ENCODE measurements at regions of chr9 and their contacts with region 1.

Region 1: GRCh38 chr9:133144137-133144903 is 19.4 kb downstream of the GBGT1 start:
- DNase-seq: peak; percentile 96
- H3K4me3 Mint-ChIP-seq: peak overlapping the region; percentile 64
- H3K27ac Mint-ChIP-seq: peak overlapping the region; percentile 93
- H3K4me1 Mint-ChIP-seq: peaks cover 83% of the 10 kb centered on the region
- H3K27me3 Mint-ChIP-seq: peaks cover 5% of the 10 kb centered on the region

Region 2: GRCh38 chr9:133023117-133023890 is 121.0 kb before region 1 on chr9:
- CTCF ChIA-PET with region 1: interaction called, 18 read pairs
- DNase-seq: peak; percentile 81
- H3K4me3 Mint-ChIP-seq: peak overlapping the region; percentile 35
- H3K27ac Mint-ChIP-seq: peak overlapping the region; percentile 28
- H3K4me1 Mint-ChIP-seq: peaks cover 28% of the 10 kb centered on the region
- H3K27me3 Mint-ChIP-seq: peaks cover 17% of the 10 kb centered on the region

Region 3: GRCh38 chr9:133037775-133038515 is 106.4 kb before region 1 on chr9:
- CTCF ChIA-PET with region 1: interaction called, 39 read pairs
- DNase-seq: no peak
- H3K4me3 Mint-ChIP-seq: no peak overlapping the region
- H3K27ac Mint-ChIP-seq: no peak overlapping the region
- H3K4me1 Mint-ChIP-seq: peaks cover 20% of the 10 kb centered on the region
- H3K27me3 Mint-ChIP-seq: no peaks in the 10 kb centered on the region

Region 4: GRCh38 chr9:133058550-133059320 is 85.6 kb before region 1 on chr9:
- CTCF ChIA-PET with region 1: interaction called, 12 read pairs
- DNase-seq: peak; percentile 47
- H3K4me3 Mint-ChIP-seq: peak overlapping the region; percentile 26
- H3K27ac Mint-ChIP-seq: peak overlapping the region; percentile 94
- H3K4me1 Mint-ChIP-seq: peaks cover 67% of the 10 kb centered on the region
- H3K27me3 Mint-ChIP-seq: no peaks in the 10 kb centered on the region

Region 5: DNA sequence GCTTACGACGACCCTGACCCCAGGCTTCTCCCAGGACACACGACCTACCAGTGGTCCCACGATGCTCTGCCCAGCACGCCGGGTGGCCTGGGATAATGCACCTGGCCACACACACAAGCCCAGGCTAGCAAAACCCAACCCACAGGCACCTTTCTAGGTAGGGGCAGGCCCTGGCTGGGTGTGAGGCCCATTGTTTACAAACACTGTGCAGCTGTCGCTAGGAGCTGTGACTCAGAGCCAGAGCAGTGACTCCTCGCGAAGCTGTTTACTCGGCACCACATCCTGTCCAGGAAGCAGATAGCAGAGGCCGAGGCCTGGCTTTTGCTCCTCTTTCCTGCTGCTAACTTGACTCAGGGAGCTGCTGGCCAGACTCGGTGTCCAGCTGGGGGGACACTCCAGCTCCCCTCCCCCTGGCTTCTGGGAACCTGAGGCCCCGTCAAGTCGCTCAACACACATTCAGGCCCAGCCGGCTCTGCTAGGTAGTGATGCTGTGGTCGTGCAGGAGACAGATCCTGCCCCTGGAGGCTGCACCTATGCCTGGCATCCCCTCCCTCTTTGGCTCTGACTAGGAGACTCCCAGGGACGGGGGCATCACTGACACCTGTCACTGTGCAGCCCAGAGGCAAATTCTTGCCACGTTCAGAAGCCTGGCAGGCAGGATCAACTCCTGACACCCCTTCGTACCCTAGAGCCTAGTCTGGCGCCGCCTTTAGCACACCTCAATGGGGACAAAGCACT is 10.5 kb before region 1 on chr9:
- CTCF ChIA-PET with region 1: interaction called, 98 read pairs
- DNase-seq: peak; percentile 95
- H3K4me3 Mint-ChIP-seq: peak overlapping the region; percentile 53
- H3K27ac Mint-ChIP-seq: peak overlapping the region; percentile 100
- H3K4me1 Mint-ChIP-seq: peaks cover 86% of the 10 kb centered on the region
- H3K27me3 Mint-ChIP-seq: no peaks in the 10 kb centered on the region

Region 6: GRCh38 chr9:133584559-133585476 is 440.5 kb after region 1 on chr9:
- CTCF ChIA-PET with region 1: no interaction called
- DNase-seq: no peak
- H3K4me3 Mint-ChIP-seq: no peak overlapping the region
- H3K27ac Mint-ChIP-seq: no peak overlapping the region
- H3K4me1 Mint-ChIP-seq: no peaks in the 10 kb centered on the region
- H3K27me3 Mint-ChIP-seq: peaks cover 66% of the 10 kb centered on the region

Measured in activated naive CD4-positive, alpha-beta T cell treated with anti-CD3 and anti-CD28 coated beads, Interleukin-2, amount 10 ng/mL, durations not matched to agents 7 days and 5 days (primary cell).